ENCODE measurements at regions of chr12 and their contacts with region 1.

Region 1: GRCh38 chr12:12081836-12082497 is 11.2 kb downstream of the BCL2L14 start:
- DNase-seq: peak; percentile 32 to 57 (median 48)
- ATAC-seq: peak; percentile 95
- H3K4me3 ChIP-seq: no peak overlapping the region
- H3K27ac ChIP-seq: peak overlapping the region; percentile 26; the same call in 1 of the 3 replicates
- H3K4me1 ChIP-seq: peaks cover 0 to 4% of the 10 kb centered on the region in 2 experiments; a peak in 3 of 5 replicates
- H3K27me3 ChIP-seq: peaks cover 8 to 18% of the 10 kb centered on the region in 2 experiments; a peak in 3 of 5 replicates
- CTCF ChIP-seq: peak; percentile 50 to 65 (median 54); a peak in 5 of 6 replicates
- EP300 ChIP-seq: no peak
- POLR2A ChIP-seq: no peak
- RAD21 ChIP-seq: peak; percentile 70 to 82

Region 2: GRCh38 chr12:12327802-12328201 is 245.8 kb after region 1 on chr12:
- CTCF ChIA-PET with region 1: interaction called, 11 read pairs
- POLR2A ChIA-PET with region 1: interaction called, 3 read pairs
- in situ Hi-C with region 1: loop called (anchors 5 kb)
- intact Hi-C with region 1: loop called (anchors 1 kb)
- DNase-seq: peak; percentile 36 to 72 (median 41)
- ATAC-seq: peak; percentile 60; the same call in 2 of the 3 replicates
- H3K4me3 ChIP-seq: no peak overlapping the region
- H3K27ac ChIP-seq: no peak overlapping the region
- H3K4me1 ChIP-seq: peaks cover 0 to 4% of the 10 kb centered on the region in 2 experiments; a peak in 1 of 5 replicates
- H3K27me3 ChIP-seq: no peaks in the 10 kb centered on the region
- CTCF ChIP-seq: peak; percentile 50 to 71 (median 66); a peak in 5 of 6 replicates
- EP300 ChIP-seq: no peak
- POLR2A ChIP-seq: no peak
- RAD21 ChIP-seq: peak; percentile 64 to 85

Region 3: GRCh38 chr12:12334367-12335040 is 252.5 kb after region 1 on chr12:
- CTCF ChIA-PET with region 1: interaction called, 11 read pairs
- POLR2A ChIA-PET with region 1: interaction called, 3 read pairs
- in situ Hi-C with region 1: loop called (anchors 5 kb)
- intact Hi-C with region 1: no loop called
- DNase-seq: peak; percentile 64 to 67 (median 65)
- ATAC-seq: peak; percentile 83
- H3K4me3 ChIP-seq: no peak overlapping the region
- H3K27ac ChIP-seq: no peak overlapping the region
- H3K4me1 ChIP-seq: no peaks in the 10 kb centered on the region; a peak in 1 of 5 replicates
- H3K27me3 ChIP-seq: no peaks in the 10 kb centered on the region
- CTCF ChIP-seq: peak; percentile 80 to 88 (median 80)
- EP300 ChIP-seq: no peak
- POLR2A ChIP-seq: no peak
- RAD21 ChIP-seq: peak; percentile 40 to 71

Region 4: GRCh38 chr12:12551115-12551514 is 469.1 kb after region 1 on chr12:
- CTCF ChIA-PET with region 1: no interaction called
- POLR2A ChIA-PET with region 1: no interaction called
- in situ Hi-C with region 1: loop called (anchors 10 kb)
- intact Hi-C with region 1: no loop called
- DNase-seq: no peak
- ATAC-seq: no peak
- H3K4me3 ChIP-seq: no peak overlapping the region
- H3K27ac ChIP-seq: no peak overlapping the region
- H3K4me1 ChIP-seq: no peaks in the 10 kb centered on the region
- H3K27me3 ChIP-seq: no peaks in the 10 kb centered on the region
- CTCF ChIP-seq: no peak
- EP300 ChIP-seq: no peak
- POLR2A ChIP-seq: no peak
- RAD21 ChIP-seq: no peak